ENCODE measurements at regions of chr2 and their contacts with region 1.

Region 1: GRCh38 chr2:16756831-16757644 is 91.4 kb upstream of the CYRIA start:
- H3K4me3 Mint-ChIP-seq: no peak overlapping the region
- H3K27ac Mint-ChIP-seq: peak overlapping the region; percentile 41
- H3K4me1 Mint-ChIP-seq: peaks cover 45% of the 10 kb centered on the region
- H3K27me3 Mint-ChIP-seq: no peaks in the 10 kb centered on the region

Region 2: GRCh38 chr2:16166431-16166981 is 590.5 kb before region 1 on chr2:
- intact Hi-C with region 1: no loop called
- H3K4me3 Mint-ChIP-seq: no peak overlapping the region
- H3K27ac Mint-ChIP-seq: no peak overlapping the region
- H3K4me1 Mint-ChIP-seq: no peaks in the 10 kb centered on the region
- H3K27me3 Mint-ChIP-seq: no peaks in the 10 kb centered on the region

Region 3: DNA sequence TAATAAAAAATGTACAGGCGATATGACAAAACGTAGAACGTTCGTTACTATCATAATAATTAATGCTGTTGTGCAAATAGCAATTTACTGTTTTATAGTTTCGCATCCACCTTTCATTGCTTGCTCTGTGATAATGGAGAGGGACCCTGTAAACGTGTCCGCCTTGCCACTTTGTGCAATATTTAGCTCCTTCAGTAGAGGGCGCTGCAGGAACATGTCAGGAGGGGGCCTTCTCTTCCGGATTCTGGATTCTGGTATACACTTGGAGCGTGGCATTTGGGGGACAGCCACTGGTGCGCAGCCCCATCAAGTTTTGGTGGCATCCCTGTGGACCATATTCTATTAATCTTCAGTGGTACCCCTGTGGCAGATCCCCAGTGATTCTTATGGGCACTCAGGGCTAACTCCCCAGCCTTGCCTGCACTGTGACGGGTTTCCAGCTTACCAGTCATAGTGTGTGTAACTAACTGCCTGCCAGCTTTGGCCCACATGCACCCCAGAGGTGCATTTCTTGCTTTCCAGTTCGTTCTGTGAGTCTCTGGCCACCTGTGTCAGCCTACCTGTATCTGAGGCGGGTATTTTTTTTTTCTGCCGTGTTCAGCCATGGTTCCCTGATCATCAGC is 231.7 kb before region 1 on chr2:
- intact Hi-C with region 1: loop called (anchors 2 kb)
- H3K4me3 Mint-ChIP-seq: no peak overlapping the region
- H3K27ac Mint-ChIP-seq: no peak overlapping the region
- H3K4me1 Mint-ChIP-seq: no peaks in the 10 kb centered on the region
- H3K27me3 Mint-ChIP-seq: peaks cover 5% of the 10 kb centered on the region

Region 4: DNA sequence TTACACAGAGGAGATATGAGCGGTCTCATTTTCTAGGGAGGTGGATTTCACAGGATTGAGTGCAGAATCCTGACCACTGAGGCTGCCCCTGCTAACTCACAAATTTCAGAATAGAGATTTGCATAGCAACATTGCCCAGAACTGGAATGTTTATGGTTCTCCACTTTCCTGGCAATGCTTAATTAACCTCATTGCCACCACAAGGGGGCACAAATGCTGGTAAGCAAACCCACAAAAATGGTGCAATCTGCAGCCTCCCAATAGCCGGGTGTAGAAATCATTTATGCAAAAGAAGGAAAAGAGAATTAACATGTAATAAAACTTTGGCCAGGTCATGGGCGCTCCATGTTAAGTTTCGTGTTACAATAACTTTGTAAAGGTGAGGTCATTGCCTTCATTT is 203.8 kb before region 1 on chr2:
- intact Hi-C with region 1: loop called (anchors 1 kb)
- H3K4me3 Mint-ChIP-seq: no peak overlapping the region
- H3K27ac Mint-ChIP-seq: no peak overlapping the region
- H3K4me1 Mint-ChIP-seq: no peaks in the 10 kb centered on the region
- H3K27me3 Mint-ChIP-seq: no peaks in the 10 kb centered on the region

Region 5: GRCh38 chr2:16608661-16609643 is 148.1 kb before region 1 on chr2:
- intact Hi-C with region 1: loop called (anchors 1 kb)
- H3K4me3 Mint-ChIP-seq: peak overlapping the region; percentile 64
- H3K27ac Mint-ChIP-seq: peak overlapping the region; percentile 69
- H3K4me1 Mint-ChIP-seq: peaks cover 63% of the 10 kb centered on the region
- H3K27me3 Mint-ChIP-seq: no peaks in the 10 kb centered on the region

Region 6: DNA sequence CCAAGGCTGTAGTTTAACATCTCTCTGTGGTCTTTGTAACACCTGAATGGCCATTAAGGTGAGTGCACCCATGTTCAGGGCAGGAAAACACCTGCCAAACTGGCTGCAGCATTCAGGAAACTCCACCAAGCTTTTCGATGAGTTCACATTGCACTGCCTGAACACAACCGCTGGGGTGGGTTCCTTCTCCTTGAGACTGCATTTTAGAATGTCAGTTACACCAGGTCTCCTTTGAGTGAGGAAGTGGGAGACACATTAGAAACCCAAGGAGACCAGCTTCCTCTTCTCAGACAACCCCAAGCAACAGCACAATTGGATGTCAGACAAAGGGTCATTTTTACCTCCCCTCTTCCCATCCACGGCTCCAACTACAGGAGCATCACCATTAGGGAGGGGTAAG is 126.6 kb before region 1 on chr2:
- intact Hi-C with region 1: loop called (anchors 5 kb)
- H3K4me3 Mint-ChIP-seq: no peak overlapping the region
- H3K27ac Mint-ChIP-seq: peak overlapping the region; percentile 86
- H3K4me1 Mint-ChIP-seq: peaks cover 100% of the 10 kb centered on the region
- H3K27me3 Mint-ChIP-seq: no peaks in the 10 kb centered on the region

Region 7: GRCh38 chr2:16745466-16745865 is 11.6 kb before region 1 on chr2:
- intact Hi-C with region 1: loop called (anchors 1 kb)
- H3K4me3 Mint-ChIP-seq: no peak overlapping the region
- H3K27ac Mint-ChIP-seq: peak overlapping the region; percentile 42
- H3K4me1 Mint-ChIP-seq: peaks cover 53% of the 10 kb centered on the region
- H3K27me3 Mint-ChIP-seq: peaks cover 12% of the 10 kb centered on the region

Measured in dendritic cell treated with granulocyte-macrophage colony-stimulating factor and Interleukin-4, amounts not matched to agents 40 ng/mL and 50 ng/mL, for 4 days (primary cell).